ENCODE measurements at regions of chr16 and their contacts with region 1.

Region 1: GRCh38 chr16:1782352-1783091 is at the starts of genes NUBP2 and SPSB3:
- DNase-seq: peak; percentile 99
- ATAC-seq: peak; percentile 87
- H3K4me3 Mint-ChIP-seq: peak within 1 kb of the TSS; percentile 93
- H3K27ac Mint-ChIP-seq: peak within 1 kb of the TSS; percentile 83
- H3K4me1 Mint-ChIP-seq: peaks cover 7% of the 10 kb centered on the region
- H3K27me3 Mint-ChIP-seq: no peaks in the 10 kb centered on the region
- CTCF ChIP-seq: no peak
- total RNA-seq, gene NUBP2: 76.4 to 89.2 TPM (median 77.6 TPM) in 3 replicates
- total RNA-seq, gene SPSB3: 27.2 to 32.8 TPM (median 28.4 TPM) in 3 replicates

Region 2: GRCh38 chr16:1723450-1724147 is 58.9 kb before region 1 on chr16:
- CTCF ChIA-PET with region 1: interaction called, 10 read pairs
- POLR2A ChIA-PET with region 1: no interaction called
- DNase-seq: peak; percentile 65
- ATAC-seq: peak; percentile 71
- H3K4me3 Mint-ChIP-seq: no peak overlapping the region
- H3K27ac Mint-ChIP-seq: no peak overlapping the region
- H3K4me1 Mint-ChIP-seq: 0 out of 2 replicates have a peak, but pooled peaks cover 3% of the 10 kb centered on the region
- H3K27me3 Mint-ChIP-seq: no peaks in the 10 kb centered on the region
- CTCF ChIP-seq: peak; percentile 69

Region 3: GRCh38 chr16:1763521-1764511 is 18.7 kb before region 1 on chr16:
- CTCF ChIA-PET with region 1: interaction called, 17 read pairs
- POLR2A ChIA-PET with region 1: interaction called, 7 read pairs
- DNase-seq: peak; percentile 91
- ATAC-seq: peak; percentile 82
- H3K4me3 Mint-ChIP-seq: peak overlapping the region; percentile 45
- H3K27ac Mint-ChIP-seq: no peak overlapping the region
- H3K4me1 Mint-ChIP-seq: no peaks in the 10 kb centered on the region
- H3K27me3 Mint-ChIP-seq: no peaks in the 10 kb centered on the region
- CTCF ChIP-seq: peak; percentile 48

Region 4: DNA sequence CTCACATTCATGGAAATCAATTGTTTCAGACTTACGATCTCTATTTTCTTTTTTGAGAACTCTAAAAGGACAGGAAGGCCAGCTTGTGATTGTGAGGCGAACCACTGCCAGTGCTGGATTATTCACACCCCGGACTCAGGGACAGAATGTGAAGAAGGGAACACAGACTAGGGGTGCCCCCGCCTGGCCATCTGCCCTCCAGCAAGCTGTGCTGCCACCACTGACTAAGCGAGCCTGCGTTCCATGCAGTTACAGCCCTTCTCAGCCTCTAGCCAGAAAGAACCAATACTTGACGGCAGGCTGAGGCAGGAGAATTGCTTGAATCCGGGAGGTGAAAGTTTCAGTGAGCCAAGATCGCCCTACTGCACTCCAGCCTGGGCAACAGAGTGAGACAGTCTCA is 41.3 kb after region 1 on chr16:
- CTCF ChIA-PET with region 1: interaction called, 18 read pairs
- POLR2A ChIA-PET with region 1: interaction called, 4 read pairs
- DNase-seq: peak; percentile 67
- ATAC-seq: peak; percentile 50
- H3K4me3 Mint-ChIP-seq: peak overlapping the region; percentile 45; the same call in 1 of the 2 replicates
- H3K27ac Mint-ChIP-seq: peak overlapping the region; percentile 93
- H3K4me1 Mint-ChIP-seq: peaks cover 16% of the 10 kb centered on the region
- H3K27me3 Mint-ChIP-seq: peaks cover 2% of the 10 kb centered on the region; the same call in 1 of the 2 replicates
- CTCF ChIP-seq: no peak